ENCODE measurements at regions of chr9 and their contacts with region 1.

Region 1: DNA sequence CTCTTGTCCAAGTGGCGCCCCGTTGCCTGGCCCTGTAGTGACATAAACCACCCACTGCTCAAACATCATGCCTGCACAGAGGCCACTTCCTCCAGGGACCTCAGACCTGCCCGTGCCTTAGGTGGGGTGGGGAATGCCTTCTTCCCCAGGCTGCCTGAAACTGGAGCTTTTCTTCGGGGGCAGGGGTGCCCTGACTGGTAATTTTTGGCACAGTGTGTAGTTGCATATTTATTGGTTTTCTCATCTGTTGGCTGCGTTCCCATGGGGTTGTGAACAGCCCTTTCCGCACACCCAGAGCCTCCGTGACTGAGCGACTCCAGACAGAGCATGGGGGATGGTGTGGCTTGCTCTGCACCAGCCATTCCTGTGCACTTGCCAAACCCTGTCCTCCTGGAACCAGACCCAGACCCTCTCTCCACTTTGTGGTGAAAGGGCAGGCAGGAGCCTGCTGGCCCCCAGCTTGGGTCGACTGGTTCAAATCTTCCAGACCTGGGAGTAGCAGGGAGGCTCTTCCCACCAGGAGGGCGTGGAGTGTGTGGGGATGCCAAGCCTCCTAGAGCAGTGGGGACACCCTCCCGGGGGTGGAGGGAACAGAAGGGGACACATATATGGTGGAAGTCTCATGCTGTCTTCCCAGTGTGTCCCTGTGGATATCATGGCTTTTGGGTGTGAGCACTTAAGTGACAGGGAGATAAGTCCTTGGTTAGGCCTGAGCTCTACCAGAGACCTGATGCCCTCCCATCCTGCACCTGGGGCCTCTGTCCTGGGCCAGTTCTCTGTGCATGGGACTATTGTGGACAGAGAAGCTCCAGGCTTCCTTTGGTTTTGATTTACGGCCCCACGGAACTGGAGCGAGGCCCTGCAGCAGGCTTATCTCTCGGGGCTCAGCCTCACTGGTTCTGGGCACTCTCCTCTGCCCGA is 39.6 kb downstream of the WNK2 start:
- DNase-seq: peak; percentile 97
- H3K4me3 ChIP-seq: peak overlapping the region; percentile 30; the same call in 1 of the 2 replicates
- H3K27ac ChIP-seq: peak overlapping the region; percentile 78
- H3K4me1 ChIP-seq: peaks cover 54% of the 10 kb centered on the region
- H3K27me3 ChIP-seq: no peaks in the 10 kb centered on the region
- CTCF ChIP-seq: no peak

Region 2: DNA sequence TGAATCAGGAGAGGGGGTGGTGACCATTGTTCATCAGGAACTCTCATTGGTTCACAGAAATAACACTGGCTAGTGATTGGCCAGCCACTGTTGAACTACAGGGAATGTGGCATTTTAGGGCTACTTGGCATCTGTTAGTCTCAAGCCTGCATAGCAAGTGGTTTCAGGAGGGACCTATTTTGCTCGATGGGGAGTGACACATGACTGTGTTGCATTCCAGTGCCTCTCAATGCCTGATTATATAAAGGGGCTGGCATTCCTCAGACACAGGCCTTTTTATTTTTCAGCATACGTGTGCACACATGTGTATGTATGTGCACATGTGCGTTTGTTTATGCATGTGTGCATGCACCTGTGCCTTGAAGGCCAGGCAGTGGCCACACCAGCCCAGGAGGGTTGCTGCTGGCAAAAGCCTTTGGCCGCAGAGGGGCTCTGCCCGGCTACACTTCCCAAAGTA is 253.0 kb before region 1 on chr9:
- CTCF ChIA-PET with region 1: no interaction called
- POLR2A ChIA-PET with region 1: no interaction called
- intact Hi-C with region 1: loop called (anchors 5 kb)
- DNase-seq: peak; percentile 76 to 85
- H3K4me3 ChIP-seq: no peak overlapping the region
- H3K27ac ChIP-seq: peak overlapping the region; percentile 30; the same call in 1 of the 2 replicates
- H3K4me1 ChIP-seq: peaks cover 54% of the 10 kb centered on the region
- H3K27me3 ChIP-seq: no peaks in the 10 kb centered on the region
- CTCF ChIP-seq: no peak

Region 3: DNA sequence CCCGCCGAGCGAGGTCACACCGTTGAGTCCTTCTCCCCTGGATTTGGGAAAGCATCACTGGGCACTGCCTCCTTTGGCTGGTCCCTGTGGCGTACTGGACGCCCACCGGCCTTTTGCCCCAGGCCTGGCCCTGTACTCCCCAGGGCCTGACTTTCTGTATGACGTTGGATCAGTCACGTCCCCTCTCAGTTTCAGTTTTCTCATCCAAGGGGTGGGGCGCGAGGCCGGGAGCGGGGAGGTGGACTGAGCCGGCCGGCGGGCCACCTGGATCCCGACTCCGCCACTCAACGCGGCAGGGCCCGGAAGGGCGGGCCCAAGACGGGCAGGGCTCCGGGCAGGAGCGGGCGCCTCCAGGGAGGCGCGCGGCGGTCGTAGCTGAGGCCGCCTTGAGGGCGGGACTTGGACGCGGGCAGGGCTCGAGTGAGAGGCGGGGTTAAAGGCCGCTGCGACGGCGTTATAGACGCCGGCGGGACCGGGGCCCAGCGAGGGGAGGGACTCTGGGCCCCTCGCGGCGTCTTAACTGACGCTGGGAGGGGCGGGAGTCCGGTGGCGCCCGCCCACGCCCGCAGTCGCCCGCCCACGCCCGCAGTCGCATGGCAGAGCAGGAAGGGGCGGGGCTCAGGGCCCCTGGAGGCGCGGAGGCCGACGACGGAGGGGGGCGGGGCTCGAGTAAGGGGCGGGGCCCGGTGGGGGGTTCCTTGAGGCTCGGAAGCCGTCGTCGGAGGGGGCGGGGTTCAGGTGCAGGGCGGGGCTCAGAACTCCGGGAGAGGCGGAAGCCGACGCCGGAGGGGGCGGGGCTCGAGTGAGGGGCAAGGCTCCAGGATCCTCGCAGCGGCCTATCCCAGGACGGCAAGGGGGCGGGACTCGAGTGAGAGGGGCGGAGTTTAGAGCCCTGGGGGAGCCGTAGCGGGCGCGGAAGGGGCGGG is 128.1 kb before region 1 on chr9:
- CTCF ChIA-PET with region 1: no interaction called
- POLR2A ChIA-PET with region 1: no interaction called
- intact Hi-C with region 1: loop called (anchors 5 kb)
- DNase-seq: peak; percentile 90 to 100
- H3K4me3 ChIP-seq: peak overlapping the region; percentile 90; the same call in 1 of the 2 replicates
- H3K27ac ChIP-seq: peak overlapping the region; percentile 82
- H3K4me1 ChIP-seq: peaks cover 57% of the 10 kb centered on the region
- H3K27me3 ChIP-seq: no peaks in the 10 kb centered on the region
- CTCF ChIP-seq: no peak

Region 4: GRCh38 chr9:93159601-93160471 is 63.7 kb before region 1 on chr9:
- CTCF ChIA-PET with region 1: no interaction called
- POLR2A ChIA-PET with region 1: no interaction called
- intact Hi-C with region 1: no loop called
- DNase-seq: peak; percentile 60 to 95
- H3K4me3 ChIP-seq: no peak overlapping the region
- H3K27ac ChIP-seq: no peak overlapping the region
- H3K4me1 ChIP-seq: no peaks in the 10 kb centered on the region; the same call in 1 of the 2 replicates
- H3K27me3 ChIP-seq: no peaks in the 10 kb centered on the region
- CTCF ChIP-seq: peak; percentile 98

Region 5: GRCh38 chr9:93183609-93184431 is 39.7 kb before region 1 on chr9 and contains the start of gene WNK2:
- CTCF ChIA-PET with region 1: no interaction called
- POLR2A ChIA-PET with region 1: no interaction called
- intact Hi-C with region 1: loop called (anchors 5 kb)
- DNase-seq: peak in 1 of 2 experiments; percentile 79
- H3K4me3 ChIP-seq: peak within 1 kb of the TSS; percentile 74
- H3K27ac ChIP-seq: no peak within 1 kb of the TSS
- H3K4me1 ChIP-seq: peaks cover 8% of the 10 kb centered on the region; the same call in 1 of the 2 replicates
- H3K27me3 ChIP-seq: no peaks in the 10 kb centered on the region
- CTCF ChIP-seq: no peak
- total RNA-seq, gene WNK2: 44.6 and 61.3 TPM in 2 replicates

Region 6: DNA sequence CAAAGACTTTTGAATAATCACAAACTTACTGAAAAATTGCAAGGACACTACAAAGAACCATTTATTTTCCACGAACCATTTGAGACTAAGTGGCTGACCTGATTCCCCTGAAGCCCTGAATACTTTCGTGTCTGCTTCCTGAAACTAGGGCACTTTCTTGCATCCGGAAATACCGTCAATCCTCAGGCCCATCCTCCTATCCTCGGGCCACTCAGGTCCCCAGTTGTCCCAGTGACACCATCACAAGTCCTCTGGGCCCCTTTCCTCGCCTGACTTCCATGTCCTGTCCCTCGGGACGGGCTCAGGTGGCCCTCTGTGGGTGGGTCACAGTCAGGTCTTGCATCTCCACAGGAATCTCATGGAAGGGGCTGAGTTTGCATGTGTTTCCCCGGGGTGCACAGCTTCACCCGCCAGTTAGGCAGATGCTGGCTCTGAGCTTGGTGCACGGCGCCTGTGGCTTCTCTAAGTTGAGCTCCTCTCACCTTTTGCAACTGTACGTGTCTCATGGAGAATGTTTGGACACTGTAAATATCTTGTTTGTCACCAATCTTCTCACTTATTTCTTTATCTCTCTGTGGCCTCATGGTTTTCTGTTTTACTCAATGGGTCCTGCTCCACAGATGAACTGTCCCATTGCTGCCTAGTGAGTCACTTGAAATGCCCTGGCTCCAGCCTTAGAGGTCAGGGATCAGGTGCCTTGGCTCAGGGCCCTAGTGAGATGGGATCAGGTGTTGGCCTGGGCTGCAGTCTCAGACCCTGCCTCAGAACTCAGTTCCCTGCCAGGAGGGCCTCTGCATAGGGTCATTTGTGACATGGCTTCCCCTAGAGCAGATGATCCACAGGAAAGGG is 21.8 kb after region 1 on chr9:
- CTCF ChIA-PET with region 1: no interaction called
- POLR2A ChIA-PET with region 1: no interaction called
- intact Hi-C with region 1: loop called (anchors 1 kb)
- DNase-seq: peak; percentile 70 to 79
- H3K4me3 ChIP-seq: no peak overlapping the region
- H3K27ac ChIP-seq: peak overlapping the region; percentile 90
- H3K4me1 ChIP-seq: peaks cover 43% of the 10 kb centered on the region
- H3K27me3 ChIP-seq: no peaks in the 10 kb centered on the region
- CTCF ChIP-seq: no peak

Region 7: GRCh38 chr9:93288891-93289883 is 65.7 kb after region 1 on chr9:
- CTCF ChIA-PET with region 1: no interaction called
- POLR2A ChIA-PET with region 1: interaction called, 4 read pairs
- intact Hi-C with region 1: loop called (anchors 2 kb)
- DNase-seq: peak; percentile 79 to 85
- H3K4me3 ChIP-seq: no peak overlapping the region
- H3K27ac ChIP-seq: peak overlapping the region; percentile 29; the same call in 1 of the 2 replicates
- H3K4me1 ChIP-seq: peaks cover 21% of the 10 kb centered on the region
- H3K27me3 ChIP-seq: no peaks in the 10 kb centered on the region
- CTCF ChIP-seq: no peak